Calu3 (cell line): ENCODE measurements at regions of chr7 and their contacts with region 1.

Region 1: GRCh38 chr7:149422129-149422913 is 38.5 kb downstream of the ZNF777 start:
- DNase-seq: peak; percentile 86
- H3K4me3 Mint-ChIP-seq: peak overlapping the region; percentile 82
- H3K27ac Mint-ChIP-seq: no peak overlapping the region
- H3K4me1 Mint-ChIP-seq: no peaks in the 10 kb centered on the region
- H3K27me3 Mint-ChIP-seq: no peaks in the 10 kb centered on the region
- CTCF ChIP-seq: peak; percentile 53

Region 2: GRCh38 chr7:148645898-148646297 is 776.4 kb before region 1 on chr7:
- CTCF ChIA-PET with region 1: no interaction called
- intact Hi-C with region 1: no loop called
- DNase-seq: no peak
- H3K4me3 Mint-ChIP-seq: no peak overlapping the region
- H3K27ac Mint-ChIP-seq: no peak overlapping the region
- H3K4me1 Mint-ChIP-seq: peaks cover 12% of the 10 kb centered on the region
- H3K27me3 Mint-ChIP-seq: no peaks in the 10 kb centered on the region
- CTCF ChIP-seq: no peak

Region 3: GRCh38 chr7:149440222-149440621 is 17.9 kb after region 1 on chr7:
- CTCF ChIA-PET with region 1: no interaction called
- intact Hi-C with region 1: no loop called
- DNase-seq: no peak
- H3K4me3 Mint-ChIP-seq: no peak overlapping the region
- H3K27ac Mint-ChIP-seq: no peak overlapping the region
- H3K4me1 Mint-ChIP-seq: no peaks in the 10 kb centered on the region
- H3K27me3 Mint-ChIP-seq: no peaks in the 10 kb centered on the region
- CTCF ChIP-seq: no peak

Region 4: DNA sequence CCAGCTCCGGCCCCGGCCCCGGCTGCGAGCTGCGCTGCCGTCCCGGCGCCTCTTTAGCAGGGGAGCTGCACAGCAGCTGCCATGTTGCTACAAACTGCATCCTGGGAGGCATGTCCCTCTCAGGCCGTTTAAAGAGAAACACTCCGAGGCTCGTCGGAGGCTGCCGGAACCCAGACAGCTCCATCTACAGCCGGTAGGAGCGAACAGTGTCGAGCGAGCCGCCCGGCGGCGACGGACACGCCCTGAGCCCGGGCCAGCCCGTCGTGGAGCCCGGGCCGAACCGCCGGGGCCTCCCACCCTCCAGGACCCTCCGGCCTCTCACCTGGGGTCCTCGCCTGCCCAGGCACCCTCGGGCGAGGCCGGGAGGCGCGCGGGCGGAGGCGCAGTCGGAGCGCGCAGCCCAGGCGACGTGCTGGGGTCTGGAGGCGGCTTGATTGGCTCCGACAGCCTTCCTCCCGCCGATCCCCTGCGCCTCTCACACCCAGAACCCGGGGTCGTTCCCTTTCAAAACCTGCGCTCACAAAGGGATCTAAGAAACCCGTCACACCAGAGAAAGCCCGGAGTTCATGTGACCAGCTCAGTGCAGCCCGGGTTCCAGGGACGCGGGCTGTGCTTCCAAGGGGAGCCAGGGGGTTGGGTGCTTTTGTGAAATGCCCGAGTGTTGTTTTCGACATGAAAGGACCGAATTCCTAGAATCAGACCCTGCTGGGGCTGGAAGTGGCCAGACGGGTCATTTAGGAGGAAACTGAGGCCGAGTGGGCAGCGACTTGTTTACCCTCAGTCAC is 38.4 kb after region 1 on chr7 and contains the start of gene ZNF777:
- CTCF ChIA-PET with region 1: no interaction called
- intact Hi-C with region 1: loop called (anchors 2 kb)
- DNase-seq: peak; percentile 84
- H3K4me3 Mint-ChIP-seq: peak within 1 kb of the TSS; percentile 76
- H3K27ac Mint-ChIP-seq: peak within 1 kb of the TSS; percentile 3
- H3K4me1 Mint-ChIP-seq: peaks cover 8% of the 10 kb centered on the region
- H3K27me3 Mint-ChIP-seq: peaks cover 10% of the 10 kb centered on the region
- CTCF ChIP-seq: peak; percentile 39
- total RNA-seq, gene ZNF777: 12.3 and 14.9 TPM in 2 replicates

Region 5: GRCh38 chr7:149509774-149510173 is 87.5 kb after region 1 on chr7:
- CTCF ChIA-PET with region 1: no interaction called
- intact Hi-C with region 1: no loop called
- DNase-seq: no peak
- H3K4me3 Mint-ChIP-seq: no peak overlapping the region
- H3K27ac Mint-ChIP-seq: no peak overlapping the region
- H3K4me1 Mint-ChIP-seq: no peaks in the 10 kb centered on the region
- H3K27me3 Mint-ChIP-seq: peaks cover 18% of the 10 kb centered on the region
- CTCF ChIP-seq: no peak

Region 6: DNA sequence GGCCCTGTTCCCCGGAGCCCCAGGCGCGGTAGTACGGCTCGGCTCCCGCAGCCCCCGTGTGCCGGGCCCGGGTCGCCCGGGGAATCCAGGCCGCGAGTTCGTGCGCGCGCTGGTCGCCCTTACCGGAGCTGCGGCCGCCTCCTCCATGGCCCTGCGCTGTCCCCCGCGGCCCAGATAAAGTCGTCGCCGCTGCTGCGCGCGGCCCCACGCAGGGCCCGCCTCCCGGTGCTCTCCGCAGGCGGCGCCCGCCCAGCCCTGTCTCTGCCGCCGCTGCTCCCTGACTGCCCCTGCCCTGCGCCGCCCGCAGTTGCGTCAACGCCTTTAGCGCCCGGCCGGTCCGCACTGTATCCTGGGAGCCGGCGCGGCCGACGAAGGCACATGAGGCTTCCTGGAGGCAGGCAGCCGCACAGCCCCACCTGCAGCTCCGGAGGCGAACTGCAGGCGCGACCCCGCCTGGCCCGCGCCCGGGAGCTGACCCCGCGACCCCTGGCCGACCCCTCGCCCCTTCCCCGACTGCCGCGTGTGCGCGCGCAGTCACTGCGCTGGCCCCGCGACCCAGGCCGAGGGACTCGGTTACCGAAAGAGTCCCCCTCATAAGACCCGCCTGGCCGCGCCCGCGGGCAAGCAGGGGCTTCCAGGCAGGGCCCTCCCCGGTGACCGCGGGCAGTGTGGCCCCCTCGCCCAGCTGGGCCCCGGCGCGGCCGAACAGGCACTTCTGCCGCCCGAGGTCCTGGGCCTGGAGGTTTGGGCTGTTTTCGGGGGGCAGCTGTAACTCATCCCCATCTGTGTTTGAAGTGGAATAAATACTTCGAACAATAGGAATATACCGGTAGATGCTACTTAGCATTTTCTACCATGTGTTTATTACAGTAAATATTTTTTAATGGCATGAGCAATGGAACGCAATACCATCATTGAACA is 202.4 kb after region 1 on chr7:
- CTCF ChIA-PET with region 1: no interaction called
- intact Hi-C with region 1: loop called (anchors 10 kb)
- DNase-seq: peak; percentile 92
- H3K4me3 Mint-ChIP-seq: peak overlapping the region; percentile 96
- H3K27ac Mint-ChIP-seq: no peak overlapping the region
- H3K4me1 Mint-ChIP-seq: no peaks in the 10 kb centered on the region
- H3K27me3 Mint-ChIP-seq: peaks cover 27% of the 10 kb centered on the region
- CTCF ChIP-seq: peak; percentile 92